AG04450 (cell line): ENCODE measurements at regions of chr14 and their contacts with region 1.

Region 1: GRCh38 chr14:73785873-73786695 is 65.5 kb upstream of the PTGR2 start:
- DNase-seq: peak; percentile 88
- H3K4me3 ChIP-seq: peak overlapping the region; percentile 68
- H3K27ac ChIP-seq: peak overlapping the region; percentile 98
- H3K27me3 ChIP-seq: no peaks in the 10 kb centered on the region
- CTCF ChIP-seq: peak; percentile 43

Region 2: DNA sequence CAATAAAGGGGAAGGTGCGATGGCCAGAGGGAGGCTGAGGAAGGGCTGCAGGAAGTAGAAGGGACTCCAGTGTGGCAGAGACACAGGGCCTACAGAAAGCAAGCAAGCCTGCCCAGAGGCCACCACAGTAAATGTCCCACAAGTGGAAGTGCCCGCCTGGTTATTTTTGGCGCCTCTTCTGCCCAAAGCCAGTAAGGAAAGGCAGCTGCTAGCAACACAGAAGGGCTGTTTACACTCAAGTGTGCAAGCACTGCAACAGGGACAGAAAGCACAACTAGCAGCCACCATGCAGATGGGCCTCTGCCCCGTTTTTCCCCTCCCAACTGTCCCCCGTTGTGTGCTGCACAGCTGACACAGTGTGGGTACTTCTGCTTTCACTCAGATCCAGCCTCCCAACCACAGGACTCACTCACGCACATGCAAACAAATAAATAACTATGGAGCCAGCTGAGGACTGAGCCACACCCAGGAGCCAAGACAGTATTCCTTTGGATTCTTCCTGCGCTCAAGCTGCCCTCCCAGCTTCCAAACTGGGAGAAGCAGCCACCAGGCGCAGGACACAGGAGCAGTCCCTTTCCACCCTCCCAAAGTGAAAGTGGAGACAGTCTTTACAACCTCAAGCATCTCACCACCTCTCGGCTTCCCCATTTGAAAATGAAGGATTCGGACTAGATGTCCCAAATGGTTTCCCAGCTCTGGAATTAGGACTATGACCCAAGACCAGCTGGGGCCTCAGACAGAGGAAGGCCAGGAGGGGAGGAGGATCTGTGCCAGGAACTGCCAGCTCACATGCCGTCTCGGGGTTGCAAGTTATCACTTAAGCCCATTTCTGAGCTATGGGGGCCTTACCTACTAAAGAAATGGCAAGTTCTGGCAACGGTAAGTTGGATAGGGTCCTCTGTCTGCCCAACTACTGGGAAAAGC is 31.9 kb before region 1 on chr14:
- CTCF ChIA-PET with region 1: interaction called, 3 read pairs
- POLR2A ChIA-PET with region 1: interaction called, 50 read pairs
- DNase-seq: no peak
- H3K4me3 ChIP-seq: peak overlapping the region; percentile 41
- H3K27ac ChIP-seq: peak overlapping the region; percentile 68
- H3K27me3 ChIP-seq: no peaks in the 10 kb centered on the region
- CTCF ChIP-seq: no peak

Region 3: DNA sequence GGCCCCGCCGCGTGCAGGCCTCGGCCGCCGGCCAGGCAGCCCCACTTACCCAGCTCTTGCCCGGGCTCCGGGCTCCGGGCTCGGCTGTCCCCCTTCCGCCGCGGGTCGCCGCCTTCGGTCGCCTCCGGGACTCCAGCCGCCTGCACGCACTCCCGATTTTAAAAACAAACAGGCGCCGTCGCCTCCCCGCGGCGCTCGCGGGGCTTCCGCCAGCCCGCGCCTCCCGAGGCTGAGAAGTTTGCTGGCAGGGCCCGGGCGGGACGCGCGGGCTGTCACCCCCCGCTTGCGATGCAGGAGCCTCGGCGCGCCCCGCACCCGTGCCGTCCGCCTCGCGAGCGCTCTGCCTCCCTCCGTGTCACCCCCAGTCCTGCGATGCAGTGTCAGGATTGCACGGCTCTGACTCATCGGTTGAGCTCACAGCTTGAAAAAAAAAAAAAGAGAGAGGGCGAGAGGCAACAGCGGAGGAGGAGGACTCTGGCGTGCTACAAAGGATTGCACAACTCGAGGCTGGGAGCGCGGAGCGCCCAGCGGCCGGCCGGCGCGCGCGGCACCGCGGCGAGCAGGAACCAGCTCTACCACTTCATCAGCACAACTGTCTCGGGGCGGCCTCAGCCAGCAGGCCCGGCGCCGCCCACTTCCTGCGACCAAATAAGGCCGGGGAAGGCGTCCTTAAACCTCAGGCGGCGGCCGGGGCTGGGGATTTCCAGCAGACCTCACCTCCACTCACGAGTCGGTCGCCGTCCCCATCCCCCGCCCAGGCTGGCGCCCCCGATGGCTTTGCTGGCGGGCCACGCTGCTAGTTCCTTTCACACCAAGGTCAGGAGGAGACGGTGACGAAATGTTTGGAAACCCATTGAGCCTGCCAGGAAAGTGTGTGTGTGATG is 26.1 kb before region 1 on chr14:
- CTCF ChIA-PET with region 1: interaction called, 3 read pairs
- POLR2A ChIA-PET with region 1: interaction called, 50 read pairs
- DNase-seq: peak; percentile 97
- H3K4me3 ChIP-seq: peak overlapping the region; percentile 91
- H3K27ac ChIP-seq: peak overlapping the region; percentile 98
- H3K27me3 ChIP-seq: no peaks in the 10 kb centered on the region
- CTCF ChIP-seq: no peak

Region 4: GRCh38 chr14:73796893-73797542 is 10.9 kb after region 1 on chr14:
- CTCF ChIA-PET with region 1: no interaction called
- POLR2A ChIA-PET with region 1: interaction called, 11 read pairs
- DNase-seq: no peak
- H3K4me3 ChIP-seq: no peak overlapping the region
- H3K27ac ChIP-seq: no peak overlapping the region
- H3K27me3 ChIP-seq: no peaks in the 10 kb centered on the region
- CTCF ChIP-seq: no peak